Activated CD8-positive, alpha-beta memory T cell treated with anti-CD3 and anti-CD28 coated beads, Interleukin-2, amount 10 ng/mL, durations not matched to agents 7 days and 5 days (primary cell): ENCODE measurements at regions of chr9 and their contacts with region 1.

Region 1: DNA sequence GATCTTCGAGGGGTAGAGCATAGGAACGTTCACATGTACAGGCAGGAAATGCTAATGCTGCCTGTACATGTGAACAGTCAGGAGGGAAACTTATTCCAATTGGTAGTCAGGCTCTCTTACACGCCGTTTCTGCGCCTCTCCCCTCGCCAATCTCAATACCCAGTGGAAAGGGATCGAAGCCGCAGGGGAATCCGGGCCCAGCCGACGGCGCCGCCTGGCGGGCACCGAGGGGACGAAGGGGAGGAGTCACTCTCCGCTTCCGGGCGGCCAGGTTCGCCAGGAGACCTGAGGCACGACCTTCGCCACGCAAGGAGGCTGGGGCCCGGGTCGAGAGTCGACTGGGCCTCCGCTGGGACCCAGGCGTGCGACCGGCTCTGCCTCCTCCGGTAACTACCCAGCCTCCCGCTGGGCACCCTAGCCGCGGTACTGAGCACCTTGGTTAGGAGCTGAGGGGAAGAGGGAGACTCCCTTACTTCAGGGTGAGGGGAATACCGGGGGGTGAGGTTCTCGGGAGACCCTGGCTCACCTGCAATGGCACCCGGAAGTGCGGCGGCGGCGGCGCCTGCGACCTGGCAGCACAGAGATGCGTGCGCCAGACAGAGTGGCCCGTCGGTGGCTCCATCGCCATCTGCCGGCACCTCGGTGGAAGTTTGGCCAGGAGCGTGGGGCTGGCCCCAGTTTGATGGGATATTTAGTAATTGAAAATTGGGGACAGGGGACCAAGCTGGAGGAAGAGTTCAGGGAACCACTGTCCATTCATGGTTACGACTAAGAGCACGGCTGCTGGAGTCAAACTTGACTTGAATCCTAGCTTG is at the start of gene PIGO:
- DNase-seq: peak; percentile 92
- ATAC-seq: peak; percentile 95
- H3K4me3 Mint-ChIP-seq: peak within 1 kb of the TSS; percentile 84
- H3K27ac Mint-ChIP-seq: peak within 1 kb of the TSS; percentile 90
- H3K4me1 Mint-ChIP-seq: peaks cover 42% of the 10 kb centered on the region
- H3K27me3 Mint-ChIP-seq: no peaks in the 10 kb centered on the region
- total RNA-seq, gene PIGO: 28.5 to 31.6 TPM

Region 2: DNA sequence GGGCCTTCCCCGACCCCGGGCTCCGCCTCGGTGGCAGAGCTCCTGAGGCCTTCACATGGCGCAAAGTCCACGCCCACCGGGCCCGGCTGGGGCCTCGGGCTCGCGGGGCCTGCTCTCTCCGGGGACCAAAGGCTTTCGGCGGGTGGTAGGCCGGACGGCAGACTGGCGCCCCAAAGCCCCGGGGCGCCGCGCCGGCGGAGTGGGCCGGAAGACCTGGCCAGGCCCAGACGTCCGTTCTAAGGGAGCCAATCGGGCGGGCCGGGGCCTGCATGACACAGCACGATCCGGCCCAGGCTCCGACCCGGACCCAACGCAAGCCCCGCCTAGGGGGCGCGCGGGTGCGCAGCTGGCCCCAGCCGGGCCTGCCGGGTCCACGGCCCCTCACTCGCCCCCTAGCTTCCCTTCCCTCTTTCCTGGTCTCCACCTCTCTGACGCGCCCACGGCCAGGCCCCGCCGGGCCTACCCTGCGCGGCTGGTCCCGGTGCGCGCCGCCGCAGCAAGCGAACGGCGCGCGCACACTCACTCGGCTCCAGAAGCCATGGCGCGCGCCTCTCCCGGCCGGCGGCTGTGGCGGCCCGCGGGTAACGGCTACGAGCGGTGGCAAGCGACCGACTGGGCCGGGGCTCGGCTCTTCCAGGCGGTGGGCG is 24.3 kb before region 1 on chr9:
- CTCF ChIA-PET with region 1: interaction called, 69 read pairs
- DNase-seq: peak; percentile 86
- ATAC-seq: peak; percentile 71
- H3K4me3 Mint-ChIP-seq: peak overlapping the region; percentile 79
- H3K27ac Mint-ChIP-seq: peak overlapping the region; percentile 96
- H3K4me1 Mint-ChIP-seq: peaks cover 67% of the 10 kb centered on the region
- H3K27me3 Mint-ChIP-seq: no peaks in the 10 kb centered on the region

Region 3: DNA sequence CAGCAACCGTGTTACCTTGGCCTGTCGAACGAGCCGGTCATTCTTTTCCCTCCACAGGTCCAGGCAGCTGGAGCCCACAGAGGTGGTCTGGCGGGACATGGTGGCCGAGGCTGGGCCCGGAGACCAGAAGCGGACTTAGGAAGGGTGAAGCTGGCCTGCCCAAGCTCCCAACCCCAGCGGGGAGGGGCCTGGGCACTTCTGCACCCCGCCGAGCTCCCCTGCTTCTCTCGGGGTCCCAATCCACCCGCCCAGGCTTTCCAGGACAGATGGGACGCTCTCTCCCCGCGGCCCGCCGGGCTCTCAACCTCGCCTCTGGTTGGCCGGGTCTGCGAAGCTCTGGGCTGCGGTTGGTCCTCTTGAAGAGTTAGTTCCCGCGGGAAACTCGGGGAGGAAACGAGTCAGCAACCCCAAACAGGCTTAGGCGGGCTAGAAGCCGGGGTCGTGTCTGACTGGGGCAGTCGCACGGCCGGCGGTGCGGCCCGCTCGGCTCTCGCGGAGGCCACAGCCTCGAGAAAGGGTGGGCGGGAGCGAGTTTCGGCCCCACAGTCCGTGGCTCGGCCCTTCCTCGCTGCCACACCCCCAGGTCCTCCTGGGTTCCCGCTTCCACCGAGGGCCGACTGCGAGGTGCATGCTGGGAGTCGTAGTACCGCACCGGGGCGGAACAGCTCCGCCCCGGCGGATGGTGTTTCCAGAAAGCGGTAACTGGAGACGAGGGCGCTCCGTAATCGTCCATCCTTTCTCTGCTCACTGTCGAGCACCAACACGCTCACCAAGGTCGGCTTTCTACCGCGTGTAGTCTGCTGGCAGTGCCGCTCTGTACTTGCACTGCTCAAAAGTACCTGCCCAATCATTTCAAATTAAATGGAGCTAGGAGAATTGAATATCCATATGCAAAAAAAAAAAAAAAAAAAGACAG is 16.6 kb before region 1 on chr9 and contains the start of gene FANCG:
- CTCF ChIA-PET with region 1: interaction called, 69 read pairs
- DNase-seq: peak; percentile 93
- ATAC-seq: peak; percentile 94
- H3K4me3 Mint-ChIP-seq: peak within 1 kb of the TSS; percentile 92
- H3K27ac Mint-ChIP-seq: peak within 1 kb of the TSS; percentile 97
- H3K4me1 Mint-ChIP-seq: peaks cover 37% of the 10 kb centered on the region
- H3K27me3 Mint-ChIP-seq: no peaks in the 10 kb centered on the region
- total RNA-seq, gene FANCG: 121 to 141 TPM

Region 4: DNA sequence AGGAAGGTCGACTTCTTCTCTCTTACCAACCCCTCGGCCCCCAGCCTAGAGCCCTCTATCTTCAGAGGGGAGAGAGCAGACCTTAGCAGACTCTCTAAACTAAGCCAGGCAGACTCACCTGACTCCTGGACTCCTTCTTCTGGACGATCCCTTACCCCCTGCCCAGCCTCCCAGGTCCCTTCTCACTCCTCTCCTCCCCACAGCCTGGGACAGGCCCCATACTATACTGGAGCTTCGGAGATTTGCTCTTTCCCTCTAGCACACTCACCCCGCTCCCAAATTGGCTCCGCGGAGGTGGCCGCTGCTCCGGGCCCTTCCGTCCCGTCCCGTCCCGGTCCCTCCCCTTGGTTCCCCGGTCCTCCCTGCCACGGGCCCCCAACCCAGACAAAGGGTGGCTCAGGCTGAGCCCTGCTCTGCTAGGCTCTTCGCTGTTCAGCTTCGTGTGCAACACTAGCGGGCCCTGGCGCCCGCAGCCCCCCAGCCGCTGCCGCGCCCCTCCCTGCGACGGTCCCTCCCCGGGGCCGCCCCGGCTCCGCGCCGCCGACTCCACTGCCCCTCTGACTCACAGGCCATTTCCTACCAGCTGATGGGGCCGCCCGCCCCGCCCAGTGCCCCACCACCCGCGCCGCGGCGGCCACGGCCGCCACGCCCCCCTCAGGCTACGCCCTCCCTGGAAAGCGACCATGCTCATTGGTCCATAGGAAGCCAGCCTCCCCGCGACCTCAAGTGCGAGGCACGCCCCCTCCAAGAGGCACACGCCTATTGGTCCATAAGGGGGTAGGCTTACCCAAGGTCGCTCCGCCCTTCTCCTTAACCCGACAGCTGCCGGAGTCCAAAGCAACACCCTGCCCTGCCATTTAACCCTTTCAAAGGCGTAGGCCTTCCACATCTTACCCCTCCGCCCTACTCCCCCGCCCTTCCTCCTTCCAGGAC is 15.0 kb after region 1 on chr9:
- CTCF ChIA-PET with region 1: interaction called, 44 read pairs
- DNase-seq: peak; percentile 99
- ATAC-seq: peak; percentile 74
- H3K4me3 Mint-ChIP-seq: peak overlapping the region; percentile 60
- H3K27ac Mint-ChIP-seq: peak overlapping the region; percentile 82
- H3K4me1 Mint-ChIP-seq: peaks cover 41% of the 10 kb centered on the region
- H3K27me3 Mint-ChIP-seq: no peaks in the 10 kb centered on the region

Region 5: GRCh38 chr9:35152936-35153335 is 56.7 kb after region 1 on chr9:
- CTCF ChIA-PET with region 1: no interaction called
- DNase-seq: no peak
- ATAC-seq: no peak
- H3K4me3 Mint-ChIP-seq: no peak overlapping the region
- H3K27ac Mint-ChIP-seq: no peak overlapping the region
- H3K4me1 Mint-ChIP-seq: no peaks in the 10 kb centered on the region
- H3K27me3 Mint-ChIP-seq: no peaks in the 10 kb centered on the region

Region 6: DNA sequence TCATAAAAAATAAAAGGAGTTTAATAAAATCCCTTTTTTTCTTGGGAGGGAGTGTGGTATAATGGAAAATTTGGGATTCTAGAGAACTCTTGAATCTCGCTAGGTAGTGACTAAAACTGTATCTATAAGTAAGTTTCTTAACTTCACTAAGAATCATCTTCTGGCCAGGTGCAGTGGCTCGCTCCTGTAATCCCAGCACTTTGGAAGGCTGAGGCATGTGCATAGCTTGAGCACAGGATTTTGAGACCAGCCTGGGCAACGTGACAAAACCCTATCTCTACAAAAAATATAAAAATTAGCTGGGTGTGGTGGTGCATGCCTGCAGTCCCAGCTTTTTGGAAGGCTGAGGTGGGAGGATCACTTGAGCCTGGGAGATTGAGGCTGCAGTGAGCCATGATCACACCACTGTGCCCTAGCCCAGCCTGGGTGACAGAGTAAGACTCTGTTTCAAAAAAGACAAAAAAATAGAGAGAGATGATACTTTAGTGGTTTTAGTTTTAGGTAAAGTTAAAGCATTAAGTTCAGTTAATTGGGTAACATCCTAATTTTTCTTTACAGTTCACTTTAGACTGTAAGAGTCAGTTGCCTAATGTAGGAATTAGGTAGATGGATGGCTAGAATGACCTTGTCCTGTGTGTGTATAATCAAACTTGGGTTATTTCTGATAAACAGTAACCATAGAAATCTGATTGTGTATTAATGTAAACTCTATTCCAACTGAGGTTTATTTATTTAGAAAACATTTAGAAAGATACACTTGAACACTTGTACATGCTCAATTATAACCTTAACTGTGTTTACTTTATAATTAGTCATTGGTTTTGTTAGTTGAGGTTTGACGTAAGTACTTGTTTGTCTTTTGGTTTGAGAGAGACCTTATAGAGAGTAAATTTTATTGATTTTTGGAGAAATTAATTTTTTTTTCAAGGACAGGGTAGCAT is 83.4 kb after region 1 on chr9:
- CTCF ChIA-PET with region 1: no interaction called
- DNase-seq: no peak
- ATAC-seq: no peak
- H3K4me3 Mint-ChIP-seq: no peak overlapping the region
- H3K27ac Mint-ChIP-seq: no peak overlapping the region
- H3K4me1 Mint-ChIP-seq: no peaks in the 10 kb centered on the region
- H3K27me3 Mint-ChIP-seq: no peaks in the 10 kb centered on the region